ENCODE measurements at regions of chr5 and their contacts with region 1.

Region 1: GRCh38 chr5:67234671-67235176 is 38.1 kb upstream of the CD180 start:
- DNase-seq: no peak
- ATAC-seq: peak; percentile 79

Region 2: DNA sequence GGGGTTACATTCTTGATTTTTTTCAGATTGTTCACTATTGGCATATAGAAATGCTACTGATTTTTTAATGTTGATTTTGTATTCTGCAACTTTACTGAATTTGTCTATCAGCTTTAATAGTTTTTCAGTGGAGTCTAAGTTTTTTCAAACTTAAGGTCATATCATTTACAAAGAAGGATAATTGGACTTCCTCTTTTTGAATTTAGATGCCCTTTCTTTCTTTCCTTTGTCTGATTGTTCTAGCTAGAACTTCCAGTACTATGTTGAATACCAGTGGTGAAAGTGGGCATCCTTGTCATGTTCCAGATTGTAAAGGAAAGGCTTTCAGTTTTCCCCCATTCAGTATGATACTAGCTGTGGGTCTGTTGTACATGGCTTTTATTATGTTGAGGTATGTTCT is 1041.3 kb before region 1 on chr5:
- intact Hi-C with region 1: no loop called
- DNase-seq: no peak
- ATAC-seq: no peak

Region 3: GRCh38 chr5:67416133-67416937 is 181.6 kb after region 1 on chr5:
- intact Hi-C with region 1: no loop called
- DNase-seq: no peak
- ATAC-seq: peak; percentile 42

Region 4: DNA sequence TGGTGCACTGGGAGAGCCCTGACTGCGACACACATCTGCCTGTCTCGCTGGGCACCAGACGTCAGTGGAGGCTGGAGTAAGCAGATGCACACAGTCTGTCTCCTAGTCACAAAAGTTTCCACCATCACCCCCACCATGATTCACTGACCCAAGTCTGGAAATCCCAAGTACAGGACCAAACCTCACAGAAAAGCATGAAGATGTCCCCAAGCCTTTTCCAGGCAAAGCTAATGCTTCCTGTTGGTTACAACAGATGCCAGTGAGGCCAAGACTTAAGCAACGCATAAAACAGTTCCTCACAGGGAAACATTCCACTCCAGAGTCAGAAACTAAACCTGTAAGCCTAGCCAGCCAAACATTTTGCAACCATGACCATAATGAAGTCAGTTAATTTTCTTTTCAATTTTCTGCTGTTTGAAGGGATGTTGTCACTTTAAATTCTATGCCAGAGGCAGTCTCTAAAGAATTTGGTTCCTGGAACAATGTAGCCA is 1599.8 kb after region 1 on chr5:
- intact Hi-C with region 1: loop called (anchors 5 kb)
- DNase-seq: no peak
- ATAC-seq: peak; percentile 82

Measured in sciatic nerve (tissue), 2 donors.